ACHN (cell line): ENCODE measurements at regions of chr7 and their contacts with region 1.

Region 1: GRCh38 chr7:26078437-26079336 is 73.3 kb upstream of the NFE2L3 start:
- DNase-seq: peak; percentile 83

Region 2: DNA sequence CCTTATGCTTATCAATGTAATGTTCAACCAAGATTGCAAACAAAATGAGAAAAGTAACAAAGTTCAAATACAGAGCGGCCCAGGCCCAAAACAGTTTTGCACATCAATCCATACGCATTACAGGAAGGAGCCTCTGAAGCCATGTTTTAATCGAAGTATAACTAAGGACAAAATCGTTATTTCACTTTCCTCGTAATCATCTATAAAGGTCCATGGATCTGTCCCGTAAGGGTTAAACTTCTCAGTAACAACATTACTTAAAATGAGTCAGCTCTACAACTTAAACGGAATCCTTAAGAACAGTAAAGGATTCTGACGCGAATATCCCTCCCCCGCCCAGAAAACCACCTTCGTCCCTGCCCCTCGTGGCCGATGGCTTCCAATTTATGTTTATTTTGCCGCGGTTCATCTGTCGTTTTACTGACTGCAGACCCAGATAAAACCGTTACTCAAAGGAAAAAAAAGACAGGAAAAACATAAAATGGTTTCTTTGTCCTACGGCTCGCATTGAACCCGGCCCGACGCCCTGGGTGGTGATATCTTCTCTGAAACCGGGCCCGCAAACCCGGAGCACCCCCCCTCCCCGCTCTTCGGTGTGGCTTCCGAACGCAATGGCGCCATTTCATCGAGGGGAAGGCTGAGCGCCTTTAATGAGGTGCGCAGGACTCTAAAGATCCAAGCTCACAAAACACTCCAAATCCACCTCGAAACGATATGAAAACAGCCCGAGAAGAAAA is 120.8 kb after region 1 on chr7:
- in situ Hi-C with region 1: loop called (anchors 25 kb)
- DNase-seq: peak; percentile 67

Region 3: DNA sequence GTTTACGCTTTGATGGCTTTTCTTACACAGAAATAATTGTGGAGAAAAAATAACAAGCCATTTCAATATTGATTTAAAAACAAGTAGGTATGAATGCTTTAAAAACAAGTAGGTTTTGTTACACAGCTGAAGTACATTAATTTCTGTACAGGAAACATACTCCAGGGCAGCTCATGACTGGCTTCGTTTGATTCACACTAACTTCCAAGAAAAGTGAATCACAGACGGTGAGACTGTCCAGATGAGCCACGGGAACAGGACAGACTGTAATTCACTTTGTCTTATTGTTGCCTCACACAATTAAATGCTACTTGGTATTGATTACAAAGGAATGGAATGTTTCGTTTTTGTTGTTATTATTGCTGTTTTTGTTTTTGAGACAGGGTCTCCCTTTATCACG is 186.4 kb after region 1 on chr7:
- in situ Hi-C with region 1: no loop called
- DNase-seq: no peak